Activated CD4-positive, alpha-beta T cell treated with anti-CD3 and anti-CD28 coated beads for 36 hours (primary cell): ENCODE measurements at regions of chr6 and their contacts with region 1.

Region 1: GRCh38 chr6:129748212-129748900 is 38.4 kb upstream of the ARHGAP18 start:
- DNase-seq: peak; percentile 76
- ATAC-seq: peak; percentile 93
- H3K4me3 Mint-ChIP-seq: peak overlapping the region; percentile 62
- H3K27ac Mint-ChIP-seq: peak overlapping the region; percentile 92
- H3K4me1 Mint-ChIP-seq: peaks cover 61% of the 10 kb centered on the region
- H3K27me3 Mint-ChIP-seq: no peaks in the 10 kb centered on the region

Region 2: GRCh38 chr6:129490521-129491245 is 257.7 kb before region 1 on chr6:
- CTCF ChIA-PET with region 1: interaction called, 4 read pairs
- POLR2A ChIA-PET with region 1: no interaction called
- intact Hi-C with region 1: loop called (anchors 1 to 2 kb)
- DNase-seq: peak; percentile 71
- ATAC-seq: peak; percentile 84
- H3K4me3 Mint-ChIP-seq: peak overlapping the region; percentile 70
- H3K27ac Mint-ChIP-seq: peak overlapping the region; percentile 97
- H3K4me1 Mint-ChIP-seq: peaks cover 70% of the 10 kb centered on the region
- H3K27me3 Mint-ChIP-seq: no peaks in the 10 kb centered on the region

Region 3: GRCh38 chr6:129543981-129544380 is 204.4 kb before region 1 on chr6:
- CTCF ChIA-PET with region 1: no interaction called
- POLR2A ChIA-PET with region 1: no interaction called
- intact Hi-C with region 1: no loop called
- DNase-seq: no peak
- ATAC-seq: no peak
- H3K4me3 Mint-ChIP-seq: no peak overlapping the region
- H3K27ac Mint-ChIP-seq: no peak overlapping the region
- H3K4me1 Mint-ChIP-seq: no peaks in the 10 kb centered on the region
- H3K27me3 Mint-ChIP-seq: no peaks in the 10 kb centered on the region

Region 4: DNA sequence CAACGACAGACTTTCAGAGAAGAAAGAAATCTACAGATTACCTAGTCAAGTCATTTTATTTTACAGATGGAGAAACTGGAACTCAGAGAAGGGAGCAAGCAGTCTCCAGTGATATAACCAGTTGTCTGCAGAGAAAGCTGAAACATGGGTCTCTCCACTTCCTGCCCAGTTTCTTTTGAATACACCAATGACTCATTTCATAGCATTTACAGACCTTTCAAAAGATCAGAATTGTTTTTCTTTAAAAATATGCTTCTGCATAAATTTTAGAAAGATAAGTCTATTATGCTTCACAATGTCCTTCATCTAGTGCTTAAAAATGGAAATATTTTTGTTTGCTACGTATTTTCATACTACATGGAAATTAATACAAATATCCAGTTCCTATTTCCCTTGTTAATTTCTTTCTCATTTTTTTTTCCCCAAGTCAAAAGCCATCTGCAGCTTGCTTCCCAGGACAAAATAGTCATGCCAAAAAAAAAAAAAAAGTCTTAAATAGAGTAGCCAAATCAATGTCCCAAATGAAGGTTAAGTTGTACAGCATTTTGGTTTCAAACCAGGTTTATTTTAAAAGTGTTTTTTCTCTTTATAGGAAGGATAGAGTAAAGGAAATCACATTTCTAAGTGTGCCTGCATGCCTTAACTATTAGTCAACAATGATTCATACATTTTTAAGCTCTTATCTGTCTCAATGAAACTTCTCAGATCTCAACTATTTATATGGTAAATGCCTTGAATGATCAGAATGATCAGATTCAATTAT is 75.3 kb before region 1 on chr6:
- CTCF ChIA-PET with region 1: interaction called, 5 read pairs
- POLR2A ChIA-PET with region 1: no interaction called
- intact Hi-C with region 1: loop called (anchors 1 to 2 kb)
- DNase-seq: peak; percentile 24
- ATAC-seq: peak; percentile 69
- H3K4me3 Mint-ChIP-seq: peak overlapping the region; percentile 59
- H3K27ac Mint-ChIP-seq: peak overlapping the region; percentile 92
- H3K4me1 Mint-ChIP-seq: peaks cover 38% of the 10 kb centered on the region
- H3K27me3 Mint-ChIP-seq: peaks cover 2% of the 10 kb centered on the region

Region 5: GRCh38 chr6:129730477-129731165 is 17.7 kb before region 1 on chr6:
- CTCF ChIA-PET with region 1: interaction called, 10 read pairs
- POLR2A ChIA-PET with region 1: no interaction called
- intact Hi-C with region 1: no loop called
- DNase-seq: peak; percentile 27
- ATAC-seq: peak; percentile 39
- H3K4me3 Mint-ChIP-seq: no peak overlapping the region
- H3K27ac Mint-ChIP-seq: peak overlapping the region; percentile 68
- H3K4me1 Mint-ChIP-seq: peaks cover 9% of the 10 kb centered on the region
- H3K27me3 Mint-ChIP-seq: no peaks in the 10 kb centered on the region

Region 6: DNA sequence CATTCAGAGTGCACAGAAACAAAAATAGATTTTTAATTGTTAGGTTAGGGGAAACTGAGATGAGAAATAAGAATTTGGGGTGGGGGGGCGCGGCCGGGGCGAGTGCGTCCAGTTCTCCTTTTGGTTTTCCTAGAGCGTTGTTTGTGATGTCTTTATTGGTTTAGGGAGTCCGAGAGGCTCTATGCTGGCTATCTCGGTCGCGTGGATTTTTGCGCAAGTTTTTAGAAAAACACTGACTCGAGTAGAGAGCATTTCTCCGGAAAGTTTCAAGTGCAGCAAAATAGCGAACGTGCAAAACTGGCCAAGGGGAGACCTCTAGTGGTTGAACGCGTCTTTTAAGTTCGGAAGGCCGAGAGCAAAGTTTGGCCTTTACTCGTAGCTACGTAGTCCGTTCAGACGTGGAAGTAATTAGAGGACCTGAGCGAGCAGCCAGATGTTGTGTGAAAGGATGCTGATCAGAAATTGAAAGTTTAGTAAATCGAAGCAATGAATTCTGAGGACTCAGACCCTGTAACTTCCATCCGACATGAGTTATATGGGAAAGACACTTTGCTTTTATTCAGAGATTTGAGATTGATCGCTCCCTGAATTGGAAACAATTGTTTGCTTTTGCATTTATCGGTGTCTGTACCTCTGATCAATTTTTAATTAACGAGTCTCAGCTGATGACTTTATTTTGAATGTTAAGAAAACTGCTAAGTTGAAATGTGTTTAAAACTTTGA is 272.7 kb after region 1 on chr6:
- CTCF ChIA-PET with region 1: interaction called, 6 read pairs
- POLR2A ChIA-PET with region 1: interaction called, 3 read pairs
- intact Hi-C with region 1: loop called (anchors 1 to 2 kb)
- DNase-seq: peak; percentile 85
- ATAC-seq: peak; percentile 59
- H3K4me3 Mint-ChIP-seq: peak overlapping the region; percentile 91
- H3K27ac Mint-ChIP-seq: peak overlapping the region; percentile 90
- H3K4me1 Mint-ChIP-seq: peaks cover 38% of the 10 kb centered on the region
- H3K27me3 Mint-ChIP-seq: no peaks in the 10 kb centered on the region